A549 (cell line): ENCODE measurements at regions of chr2 and their contacts with region 1.

Region 1: GRCh38 chr2:64750817-64751285 is 97.1 kb upstream of the SERTAD2 start:
- DNase-seq: peak in 1 of 2 experiments; percentile 100
- ATAC-seq: peak; percentile 85 to 94
- H3K4me3 ChIP-seq: peak overlapping the region; percentile 52
- H3K27ac ChIP-seq: peak overlapping the region; percentile 73 to 96
- H3K4me1 ChIP-seq: peaks cover 22% of the 10 kb centered on the region
- CTCF ChIP-seq: no peak
- EP300 ChIP-seq: no peak
- POLR2A ChIP-seq: peak; percentile 91
- RAD21 ChIP-seq: peak in 1 of 2 experiments; percentile 1; a peak in 2 of 5 replicates

Region 2: GRCh38 chr2:64737547-64737946 is 13.3 kb before region 1 on chr2:
- CTCF ChIA-PET with region 1: interaction called, 29 read pairs
- POLR2A ChIA-PET with region 1: interaction called, 9 read pairs
- DNase-seq: no peak
- ATAC-seq: no peak
- H3K4me3 ChIP-seq: no peak overlapping the region
- H3K27ac ChIP-seq: no peak overlapping the region
- H3K4me1 ChIP-seq: no peaks in the 10 kb centered on the region
- CTCF ChIP-seq: no peak
- EP300 ChIP-seq: no peak
- POLR2A ChIP-seq: no peak
- RAD21 ChIP-seq: no peak

Region 3: DNA sequence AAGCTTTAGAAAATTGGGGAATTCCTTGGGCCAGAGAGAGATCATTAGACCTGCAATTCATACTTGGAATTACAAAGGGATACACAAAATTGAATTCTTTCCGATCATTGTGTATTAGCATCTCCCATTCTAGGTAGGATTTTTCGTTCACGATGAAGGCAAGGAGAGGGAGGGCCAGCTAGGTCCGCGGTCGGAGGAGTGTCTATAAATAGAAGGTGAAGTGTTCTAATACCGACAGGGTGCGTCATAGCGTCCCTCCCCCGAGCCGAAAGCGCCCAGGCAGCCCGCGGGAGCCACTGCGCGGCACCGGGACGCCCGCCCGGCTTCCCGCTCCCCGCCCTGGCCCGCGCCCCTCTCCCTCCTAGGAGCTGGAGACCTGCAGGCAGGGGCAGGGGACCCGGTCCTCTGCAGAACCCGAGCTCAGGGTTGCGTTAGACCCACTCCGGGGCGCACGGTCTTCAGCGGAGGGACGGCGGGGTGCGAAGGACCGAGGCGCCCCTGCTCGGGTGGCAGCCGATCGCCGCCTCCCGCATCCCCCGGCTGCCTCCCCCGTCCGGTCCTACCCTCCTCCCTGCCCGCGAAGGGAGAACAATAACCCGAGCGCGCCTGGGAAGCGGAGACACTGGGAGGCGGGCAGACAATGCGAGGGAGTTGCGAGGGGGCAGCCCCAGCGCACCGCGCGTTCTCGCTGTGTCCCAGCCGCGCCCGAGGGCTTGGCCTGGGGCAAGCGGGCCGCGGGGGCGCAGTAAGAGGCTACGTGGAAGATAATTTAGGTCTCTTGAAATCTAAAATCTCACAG is 17.0 kb after region 1 on chr2:
- CTCF ChIA-PET with region 1: interaction called, 20 read pairs
- POLR2A ChIA-PET with region 1: interaction called, 30 read pairs
- DNase-seq: peak; percentile 84
- ATAC-seq: peak; percentile 93
- H3K4me3 ChIP-seq: peak overlapping the region; percentile 65
- H3K27ac ChIP-seq: peak overlapping the region; percentile 85 to 94
- H3K4me1 ChIP-seq: peaks cover 32% of the 10 kb centered on the region
- CTCF ChIP-seq: peak; percentile 22; the same call in 2 of the 3 replicates
- EP300 ChIP-seq: no peak
- POLR2A ChIP-seq: peak; percentile 37
- RAD21 ChIP-seq: peak; percentile 26 to 55; a peak in 4 of 5 replicates

Region 4: GRCh38 chr2:64831134-64831976 is 80.5 kb after region 1 on chr2:
- CTCF ChIA-PET with region 1: interaction called, 13 read pairs
- POLR2A ChIA-PET with region 1: interaction called, 15 read pairs
- DNase-seq: peak; percentile 97 to 98
- ATAC-seq: peak; percentile 95 to 97
- H3K4me3 ChIP-seq: peak overlapping the region; percentile 11; the same call in 1 of the 3 replicates
- H3K27ac ChIP-seq: peak overlapping the region; percentile 65 to 89
- H3K4me1 ChIP-seq: peaks cover 36% of the 10 kb centered on the region
- CTCF ChIP-seq: peak; percentile 95
- EP300 ChIP-seq: peak; percentile 22 to 59; a peak in 2 of 5 replicates
- POLR2A ChIP-seq: no peak
- RAD21 ChIP-seq: peak; percentile 68 to 71

Region 5: DNA sequence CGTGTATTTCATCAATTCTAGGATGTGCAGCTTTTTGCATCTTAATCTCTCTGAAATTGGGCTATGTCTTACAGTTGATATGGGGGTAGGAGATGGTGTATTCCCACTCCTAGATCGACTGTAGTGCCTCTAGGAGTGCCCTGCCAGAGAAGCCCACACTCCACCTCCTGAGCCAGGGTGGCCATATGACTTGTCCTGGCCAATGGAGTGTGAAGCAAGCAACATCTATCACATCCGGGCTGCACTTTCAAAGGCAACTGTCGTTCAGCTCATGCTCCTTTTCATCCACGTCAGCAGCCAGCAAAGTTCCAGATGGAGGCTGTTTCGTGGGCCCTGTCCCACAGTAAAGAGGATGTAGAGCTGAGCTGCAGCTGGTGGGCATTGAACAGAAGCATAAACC is 89.0 kb after region 1 on chr2:
- CTCF ChIA-PET with region 1: interaction called, 10 read pairs
- POLR2A ChIA-PET with region 1: interaction called, 11 read pairs
- DNase-seq: no peak
- ATAC-seq: no peak
- H3K4me3 ChIP-seq: no peak overlapping the region
- H3K27ac ChIP-seq: peak overlapping the region in 1 of 2 experiments; percentile 87; a peak in 3 of 6 replicates
- H3K4me1 ChIP-seq: peaks cover 50% of the 10 kb centered on the region
- CTCF ChIP-seq: no peak
- EP300 ChIP-seq: no peak
- POLR2A ChIP-seq: no peak
- RAD21 ChIP-seq: no peak

Region 6: DNA sequence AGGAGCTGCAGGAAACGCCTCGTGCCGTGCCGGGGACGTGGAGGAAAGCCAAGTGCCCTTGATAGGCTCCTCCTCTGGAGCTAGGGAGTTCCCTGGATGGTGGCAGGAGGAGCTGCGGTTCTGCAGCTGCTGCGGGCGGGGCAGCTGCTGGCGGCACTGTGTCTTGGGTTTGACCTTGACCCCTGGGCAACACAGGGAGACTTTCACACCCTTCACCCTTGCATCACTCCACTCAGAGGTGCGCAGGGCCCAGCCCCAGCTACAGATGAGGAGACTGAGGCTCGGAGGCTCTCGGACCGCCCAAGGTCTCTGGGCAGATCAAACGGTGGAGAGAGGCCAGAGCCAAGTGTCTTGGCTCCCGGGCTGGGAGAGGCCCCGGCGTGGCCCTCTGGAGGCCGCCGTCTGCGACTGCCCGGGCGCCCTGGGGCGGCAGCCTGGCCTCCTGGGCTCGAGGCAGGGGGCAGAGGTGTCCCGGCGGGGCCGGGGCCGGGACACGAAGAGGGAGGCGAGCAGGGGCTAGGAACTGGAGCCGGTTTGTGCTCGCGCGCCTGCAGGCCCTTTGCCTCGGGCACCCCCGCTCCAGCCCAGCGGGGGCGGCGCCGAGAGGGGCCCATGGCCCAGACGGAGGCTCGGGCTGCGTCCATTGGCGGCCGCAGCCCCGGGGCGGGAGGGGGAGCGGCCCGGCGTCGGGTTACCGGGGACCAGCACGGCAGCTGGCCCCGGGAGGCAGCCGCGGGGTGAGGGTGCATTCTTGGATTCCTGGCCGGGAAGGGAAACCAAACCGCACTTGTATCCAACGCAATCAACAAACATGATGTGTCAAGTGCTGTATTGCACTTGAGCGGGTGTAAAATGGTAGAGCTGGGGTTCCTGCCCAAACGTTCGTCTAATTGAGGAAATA is 108.7 kb after region 1 on chr2:
- CTCF ChIA-PET with region 1: interaction called, 13 read pairs
- POLR2A ChIA-PET with region 1: interaction called, 25 read pairs
- DNase-seq: peak; percentile 83 to 93
- ATAC-seq: peak; percentile 83 to 89
- H3K4me3 ChIP-seq: peak overlapping the region; percentile 43
- H3K27ac ChIP-seq: peak overlapping the region; percentile 81 to 90
- H3K4me1 ChIP-seq: peaks cover 26% of the 10 kb centered on the region
- CTCF ChIP-seq: peak; percentile 28; the same call in 2 of the 3 replicates
- EP300 ChIP-seq: no peak
- POLR2A ChIP-seq: peak; percentile 59
- RAD21 ChIP-seq: peak; percentile 1 to 22; a peak in 3 of 5 replicates

Region 7: GRCh38 chr2:64873472-64873924 is 122.6 kb after region 1 on chr2:
- CTCF ChIA-PET with region 1: interaction called, 10 read pairs
- POLR2A ChIA-PET with region 1: no interaction called
- DNase-seq: peak; percentile 65 to 73
- ATAC-seq: peak; percentile 83 to 94
- H3K4me3 ChIP-seq: no peak overlapping the region
- H3K27ac ChIP-seq: no peak overlapping the region
- H3K4me1 ChIP-seq: peaks cover 15% of the 10 kb centered on the region
- CTCF ChIP-seq: peak; percentile 95
- EP300 ChIP-seq: no peak
- POLR2A ChIP-seq: no peak
- RAD21 ChIP-seq: peak; percentile 94 to 97

Region 8: GRCh38 chr2:65075605-65076344 is 324.9 kb after region 1 on chr2:
- CTCF ChIA-PET with region 1: no interaction called
- POLR2A ChIA-PET with region 1: no interaction called
- DNase-seq: no peak
- ATAC-seq: peak; percentile 31 to 49; a peak in 4 of 6 replicates
- H3K4me3 ChIP-seq: no peak overlapping the region
- H3K27ac ChIP-seq: no peak overlapping the region
- H3K4me1 ChIP-seq: peaks cover 19% of the 10 kb centered on the region
- CTCF ChIP-seq: no peak
- EP300 ChIP-seq: no peak
- POLR2A ChIP-seq: no peak; the same call in 1 of the 2 replicates
- RAD21 ChIP-seq: no peak